HEK293 (cell line): ENCODE measurements at regions of chr1 and their contacts with region 1.

Region 1: DNA sequence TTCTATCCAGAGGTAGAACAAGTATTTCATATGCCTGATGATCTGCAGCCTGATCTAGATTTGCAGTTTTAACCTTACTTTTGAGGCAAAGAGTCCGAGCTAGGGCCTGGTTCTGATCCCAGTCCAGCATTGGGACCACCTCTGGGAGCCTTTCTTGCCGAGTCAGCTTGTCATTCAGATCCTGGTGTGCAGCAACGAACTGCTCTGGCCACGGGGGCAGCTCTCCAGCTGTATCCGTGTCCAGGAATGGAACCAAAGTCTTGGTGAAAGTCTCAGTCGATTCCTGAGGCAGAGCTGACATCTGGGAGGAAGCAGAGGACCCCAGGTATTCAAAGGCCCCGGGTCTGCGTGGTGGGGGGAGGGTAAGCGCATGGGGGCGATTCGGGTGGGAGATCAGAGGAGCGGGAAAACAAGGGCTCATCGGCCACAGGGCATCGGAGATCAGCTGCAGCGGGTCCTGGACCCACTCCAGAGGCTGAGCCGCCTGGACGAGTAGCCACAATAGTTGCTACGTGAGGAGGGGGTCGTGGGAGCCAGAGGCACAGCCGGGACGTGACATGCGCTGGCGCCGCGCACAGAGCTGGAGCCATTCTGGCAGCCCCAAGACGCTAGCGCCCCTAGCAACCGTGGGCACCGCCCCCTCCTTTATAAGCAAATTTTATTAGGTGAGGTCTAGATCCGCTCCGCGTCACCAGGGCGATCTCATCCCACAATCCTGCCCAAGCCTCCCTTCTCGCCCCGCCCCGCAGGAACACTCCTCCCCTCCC is 32.4 kb upstream of the BSDC1 start:
- H3K4me3 ChIP-seq: no peak overlapping the region; the same call in 1 of the 2 replicates
- H3K27ac ChIP-seq: no peak overlapping the region
- H3K4me1 ChIP-seq: no peaks in the 10 kb centered on the region
- CTCF ChIP-seq: 0 out of 2 replicates have a peak, but pooled peaks have one; percentile 22

Region 2: GRCh38 chr1:32413507-32414185 is 13.0 kb before region 1 on chr1:
- CTCF ChIA-PET with region 1: interaction called, 13 read pairs
- POLR2A ChIA-PET with region 1: no interaction called
- H3K4me3 ChIP-seq: no peak overlapping the region
- H3K27ac ChIP-seq: no peak overlapping the region
- H3K4me1 ChIP-seq: no peaks in the 10 kb centered on the region
- CTCF ChIP-seq: no peak